BJ (cell line): ENCODE measurements at regions of chr12 and their contacts with region 1.

Region 1: GRCh38 chr12:10331642-10332239 is 24.1 kb downstream of the KLRD1 start:
- DNase-seq: no peak
- H3K4me3 ChIP-seq: no peak overlapping the region
- H3K27me3 ChIP-seq: no peaks in the 10 kb centered on the region; the same call in 1 of the 2 replicates
- CTCF ChIP-seq: peak; percentile 81

Region 2: GRCh38 chr12:10320643-10321042 is 11.1 kb before region 1 on chr12:
- CTCF ChIA-PET with region 1: interaction called, 15 read pairs
- POLR2A ChIA-PET with region 1: no interaction called
- DNase-seq: no peak
- H3K4me3 ChIP-seq: no peak overlapping the region
- H3K27me3 ChIP-seq: no peaks in the 10 kb centered on the region
- CTCF ChIP-seq: no peak

Region 3: GRCh38 chr12:10341892-10342509 is 10.3 kb after region 1 on chr12:
- CTCF ChIA-PET with region 1: no interaction called
- POLR2A ChIA-PET with region 1: no interaction called
- DNase-seq: no peak
- H3K4me3 ChIP-seq: no peak overlapping the region
- H3K27me3 ChIP-seq: no peaks in the 10 kb centered on the region
- CTCF ChIP-seq: no peak

Region 4: GRCh38 chr12:10358131-10358530 is 26.4 kb after region 1 on chr12:
- CTCF ChIA-PET with region 1: no interaction called
- POLR2A ChIA-PET with region 1: no interaction called
- DNase-seq: no peak
- H3K4me3 ChIP-seq: no peak overlapping the region
- H3K27me3 ChIP-seq: no peaks in the 10 kb centered on the region
- CTCF ChIP-seq: no peak

Region 5: GRCh38 chr12:10521555-10521954 is 189.8 kb after region 1 on chr12:
- CTCF ChIA-PET with region 1: no interaction called
- POLR2A ChIA-PET with region 1: no interaction called
- DNase-seq: no peak
- H3K4me3 ChIP-seq: no peak overlapping the region
- H3K27me3 ChIP-seq: no peaks in the 10 kb centered on the region
- CTCF ChIP-seq: no peak

Region 6: DNA sequence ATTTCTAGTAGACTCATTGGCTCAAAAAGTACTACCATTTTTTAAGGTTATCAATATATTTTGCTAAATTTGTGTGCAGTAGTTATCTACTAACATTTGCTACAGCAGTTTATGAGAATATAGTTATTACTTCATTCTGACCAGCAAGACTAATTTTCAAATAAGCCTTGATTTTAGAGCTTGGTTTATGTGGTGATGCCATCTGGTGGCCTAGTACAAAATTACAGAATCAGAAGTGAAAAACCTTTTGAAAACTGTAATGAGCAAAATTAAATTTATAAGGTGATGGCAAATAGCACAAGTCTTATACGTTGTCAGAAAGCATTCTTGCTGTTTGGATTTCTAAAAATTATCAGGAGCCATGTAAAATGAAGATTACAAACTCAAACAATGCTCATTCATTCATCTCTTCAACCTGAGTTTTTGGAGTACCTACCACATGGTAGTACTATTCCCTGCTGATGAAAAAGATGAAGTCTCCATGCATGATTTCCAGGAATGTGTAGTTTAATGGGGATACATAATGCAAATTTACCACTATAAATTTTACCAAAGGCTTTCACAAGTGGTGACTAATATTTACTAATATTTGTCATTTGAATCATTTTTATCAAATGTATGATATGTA is 230.7 kb after region 1 on chr12:
- CTCF ChIA-PET with region 1: interaction called, 13 read pairs
- POLR2A ChIA-PET with region 1: interaction called, 3 read pairs
- DNase-seq: no peak
- H3K4me3 ChIP-seq: no peak overlapping the region
- H3K27me3 ChIP-seq: no peaks in the 10 kb centered on the region
- CTCF ChIP-seq: peak; percentile 57